ENCODE measurements at regions of chr22 and their contacts with region 1.

Region 1: GRCh38 chr22:44192098-44192810 is 11.5 kb downstream of the PARVG start:
- DNase-seq: no peak
- H3K4me3 ChIP-seq: no peak overlapping the region
- H3K27ac ChIP-seq: no peak overlapping the region
- H3K4me1 ChIP-seq: no peaks in the 10 kb centered on the region
- H3K27me3 ChIP-seq: peaks cover 0 to 34% of the 10 kb centered on the region in 2 donors
- CTCF ChIP-seq: no peak
- POLR2A ChIP-seq: no peak

Region 2: GRCh38 chr22:44172370-44173108 is 19.7 kb before region 1 on chr22:
- intact Hi-C with region 1: no loop called
- DNase-seq: peak in 1 of 2 donors; percentile 58
- H3K4me3 ChIP-seq: no peak overlapping the region
- H3K27ac ChIP-seq: peak overlapping the region in 1 of 2 donors; percentile 19
- H3K4me1 ChIP-seq: no peaks in the 10 kb centered on the region
- H3K27me3 ChIP-seq: no peaks in the 10 kb centered on the region
- CTCF ChIP-seq: no peak
- POLR2A ChIP-seq: no peak

Region 3: DNA sequence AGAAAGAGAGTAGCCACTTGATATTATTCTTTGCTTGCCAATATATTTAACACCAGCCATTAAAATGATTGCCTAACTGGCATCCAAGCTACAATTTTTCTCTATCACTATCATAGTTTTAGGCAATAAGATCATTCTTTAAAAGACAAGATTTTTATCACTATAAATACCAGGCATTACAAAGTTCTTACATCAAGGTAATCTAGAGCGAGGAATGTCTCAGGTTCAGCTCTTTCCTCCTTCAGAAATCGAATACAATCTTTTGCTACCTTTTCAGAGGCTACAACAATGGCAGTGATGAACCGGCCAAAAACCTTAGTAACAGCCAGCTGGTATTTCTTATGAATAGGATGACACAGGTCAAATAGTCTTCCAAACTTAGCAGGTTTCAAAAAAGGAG is 1197.3 kb after region 1 on chr22:
- intact Hi-C with region 1: loop called (anchors 10 kb)
- DNase-seq: no peak
- H3K4me3 ChIP-seq: no peak overlapping the region
- H3K27ac ChIP-seq: no peak overlapping the region
- H3K4me1 ChIP-seq: no peaks in the 10 kb centered on the region
- H3K27me3 ChIP-seq: no peaks in the 10 kb centered on the region
- CTCF ChIP-seq: no peak
- POLR2A ChIP-seq: no peak